CD8-positive, alpha-beta T cell (primary cell): ENCODE measurements at regions of chr10 and their contacts with region 1.

Region 1: DNA sequence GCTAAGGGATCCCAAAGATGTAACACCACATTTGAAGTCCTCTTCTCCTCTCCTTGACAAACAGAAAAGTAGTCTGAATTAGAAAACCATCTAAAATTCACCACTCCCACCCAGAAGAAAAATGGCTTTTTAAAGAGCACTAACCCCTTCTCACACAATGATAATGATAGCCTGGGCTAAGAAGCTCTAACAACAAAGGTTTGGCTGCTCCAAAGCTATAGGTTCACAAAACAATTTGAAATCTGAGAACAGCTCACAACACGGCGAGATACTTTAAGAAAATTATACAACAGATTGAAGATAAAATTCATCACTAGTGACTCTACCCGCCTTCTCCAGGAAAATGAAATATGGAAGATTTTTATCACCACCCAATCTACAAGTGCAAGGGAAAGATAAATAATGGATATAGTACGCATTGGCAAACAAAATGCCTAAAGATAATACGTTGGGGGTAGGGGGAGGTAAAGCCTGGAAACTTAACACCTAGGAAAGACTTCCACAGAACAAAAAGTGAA is 7.4 kb downstream of the ITGB1 start:
- DNase-seq: no peak
- ATAC-seq: no peak
- H3K4me3 ChIP-seq: no peak overlapping the region
- H3K4me3 Mint-ChIP-seq: no peak overlapping the region
- H3K27ac ChIP-seq: peak overlapping the region in 1 of 2 experiments; percentile 49
- H3K27ac Mint-ChIP-seq: no peak overlapping the region
- H3K4me1 ChIP-seq: peaks cover 26% of the 10 kb centered on the region
- H3K4me1 Mint-ChIP-seq: peaks cover 84% of the 10 kb centered on the region
- H3K27me3 ChIP-seq: no peaks in the 10 kb centered on the region
- H3K27me3 Mint-ChIP-seq: no peaks in the 10 kb centered on the region
- CTCF ChIP-seq: no peak

Region 2: GRCh38 chr10:32937911-32938424 is 12.7 kb before region 1 on chr10:
- CTCF ChIA-PET with region 1: no interaction called
- POLR2A ChIA-PET with region 1: no interaction called
- intact Hi-C with region 1: loop called in 1 of 2 experiments (anchors 2 kb)
- DNase-seq: no peak
- ATAC-seq: no peak
- H3K4me3 ChIP-seq: no peak overlapping the region
- H3K4me3 Mint-ChIP-seq: no peak overlapping the region
- H3K27ac ChIP-seq: peak overlapping the region in 1 of 2 experiments; percentile 30
- H3K27ac Mint-ChIP-seq: no peak overlapping the region
- H3K4me1 ChIP-seq: peaks cover 11% of the 10 kb centered on the region
- H3K4me1 Mint-ChIP-seq: peaks cover 44% of the 10 kb centered on the region
- H3K27me3 ChIP-seq: no peaks in the 10 kb centered on the region
- H3K27me3 Mint-ChIP-seq: no peaks in the 10 kb centered on the region
- CTCF ChIP-seq: no peak

Region 3: GRCh38 chr10:33055625-33056024 is 105.0 kb after region 1 on chr10:
- CTCF ChIA-PET with region 1: no interaction called
- POLR2A ChIA-PET with region 1: no interaction called
- intact Hi-C with region 1: no loop called
- DNase-seq: no peak
- ATAC-seq: no peak
- H3K4me3 ChIP-seq: no peak overlapping the region
- H3K4me3 Mint-ChIP-seq: no peak overlapping the region
- H3K27ac ChIP-seq: no peak overlapping the region
- H3K27ac Mint-ChIP-seq: no peak overlapping the region
- H3K4me1 ChIP-seq: no peaks in the 10 kb centered on the region
- H3K4me1 Mint-ChIP-seq: peaks cover 4% of the 10 kb centered on the region
- H3K27me3 ChIP-seq: no peaks in the 10 kb centered on the region
- H3K27me3 Mint-ChIP-seq: no peaks in the 10 kb centered on the region
- CTCF ChIP-seq: no peak

Region 4: DNA sequence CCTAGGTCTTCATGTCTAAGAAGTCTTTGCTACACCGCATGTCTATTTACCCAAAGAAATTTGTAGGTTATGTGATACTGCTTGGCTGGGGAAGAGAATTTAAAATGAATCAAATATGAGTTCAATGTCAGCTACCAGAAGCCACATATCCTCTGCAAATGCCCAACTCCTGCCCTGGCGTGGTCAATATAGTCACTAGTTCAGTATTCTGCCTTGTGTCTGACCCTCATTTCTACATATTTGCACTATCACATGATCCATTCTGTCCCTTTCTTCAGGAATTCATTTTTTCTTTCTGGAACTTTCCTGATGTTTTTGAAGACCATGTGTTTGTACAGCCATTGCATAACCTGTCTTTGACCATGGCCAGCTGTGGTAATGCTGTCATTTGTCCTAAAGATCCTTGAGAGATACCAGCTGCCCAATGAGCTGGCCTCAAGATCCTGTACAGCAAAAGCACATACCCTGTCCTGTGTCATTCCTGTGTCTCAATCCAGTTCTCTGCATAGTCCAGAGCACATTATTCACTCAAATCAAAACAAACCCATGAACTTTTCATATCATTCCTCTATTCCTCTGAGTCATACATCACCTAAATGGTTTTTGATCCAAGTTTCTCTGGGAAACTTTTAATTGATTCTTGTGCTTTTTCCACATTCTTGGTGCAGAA is 1339.9 kb after region 1 on chr10:
- CTCF ChIA-PET with region 1: no interaction called
- POLR2A ChIA-PET with region 1: no interaction called
- intact Hi-C with region 1: no loop called
- DNase-seq: no peak
- ATAC-seq: no peak
- H3K4me3 ChIP-seq: no peak overlapping the region
- H3K4me3 Mint-ChIP-seq: no peak overlapping the region
- H3K27ac ChIP-seq: no peak overlapping the region
- H3K27ac Mint-ChIP-seq: no peak overlapping the region
- H3K4me1 ChIP-seq: no peaks in the 10 kb centered on the region
- H3K4me1 Mint-ChIP-seq: no peaks in the 10 kb centered on the region
- H3K27me3 ChIP-seq: no peaks in the 10 kb centered on the region
- H3K27me3 Mint-ChIP-seq: no peaks in the 10 kb centered on the region
- CTCF ChIP-seq: no peak